Caco-2 (cell line): ENCODE measurements at regions of chr12 and their contacts with region 1.

Region 1: GRCh38 chr12:114684098-114684869 is at the start of gene TBX3:
- DNase-seq: peak; percentile 96 to 99
- H3K4me3 ChIP-seq: peak within 1 kb of the TSS; percentile 65
- H3K4me3 Mint-ChIP-seq: peak within 1 kb of the TSS; percentile 90
- H3K27ac Mint-ChIP-seq: peak within 1 kb of the TSS; percentile 93
- H3K4me1 ChIP-seq: peaks cover 25% of the 10 kb centered on the region
- H3K4me1 Mint-ChIP-seq: peaks cover 29% of the 10 kb centered on the region
- H3K27me3 ChIP-seq: no peaks in the 10 kb centered on the region
- H3K27me3 Mint-ChIP-seq: no peaks in the 10 kb centered on the region
- CTCF ChIP-seq: peak; percentile 58 to 67
- total RNA-seq, gene TBX3: 47.2 and 54.0 TPM in 2 replicates

Region 2: GRCh38 chr12:114704096-114704495 is 19.8 kb after region 1 on chr12:
- CTCF ChIA-PET with region 1: interaction called, 52 read pairs
- POLR2A ChIA-PET with region 1: interaction called, 62 read pairs
- intact Hi-C with region 1: loop called (anchors 1 kb)
- DNase-seq: peak; percentile 60 to 70
- H3K4me3 ChIP-seq: no peak overlapping the region
- H3K4me3 Mint-ChIP-seq: peak overlapping the region; percentile 70
- H3K27ac Mint-ChIP-seq: peak overlapping the region; percentile 95
- H3K4me1 ChIP-seq: peaks cover 38% of the 10 kb centered on the region
- H3K4me1 Mint-ChIP-seq: peaks cover 38% of the 10 kb centered on the region
- H3K27me3 ChIP-seq: no peaks in the 10 kb centered on the region
- H3K27me3 Mint-ChIP-seq: no peaks in the 10 kb centered on the region
- CTCF ChIP-seq: no peak

Region 3: GRCh38 chr12:114799574-114800487 is 115.5 kb after region 1 on chr12:
- CTCF ChIA-PET with region 1: interaction called, 3 read pairs
- POLR2A ChIA-PET with region 1: interaction called, 6 read pairs
- intact Hi-C with region 1: loop called (anchors 1 kb)
- DNase-seq: peak; percentile 92 to 96
- H3K4me3 ChIP-seq: no peak overlapping the region
- H3K4me3 Mint-ChIP-seq: no peak overlapping the region
- H3K27ac Mint-ChIP-seq: peak overlapping the region; percentile 81
- H3K4me1 ChIP-seq: peaks cover 32% of the 10 kb centered on the region
- H3K4me1 Mint-ChIP-seq: peaks cover 17% of the 10 kb centered on the region
- H3K27me3 ChIP-seq: no peaks in the 10 kb centered on the region
- H3K27me3 Mint-ChIP-seq: no peaks in the 10 kb centered on the region
- CTCF ChIP-seq: no peak

Region 4: GRCh38 chr12:114903083-114903691 is 218.9 kb after region 1 on chr12:
- CTCF ChIA-PET with region 1: no interaction called
- POLR2A ChIA-PET with region 1: interaction called, 11 read pairs
- intact Hi-C with region 1: loop called (anchors 5 kb)
- DNase-seq: peak; percentile 40 to 58
- H3K4me3 ChIP-seq: peak overlapping the region; percentile 36
- H3K4me3 Mint-ChIP-seq: no peak overlapping the region
- H3K27ac Mint-ChIP-seq: no peak overlapping the region
- H3K4me1 ChIP-seq: peaks cover 33% of the 10 kb centered on the region
- H3K4me1 Mint-ChIP-seq: no peaks in the 10 kb centered on the region
- H3K27me3 ChIP-seq: no peaks in the 10 kb centered on the region
- H3K27me3 Mint-ChIP-seq: no peaks in the 10 kb centered on the region
- CTCF ChIP-seq: no peak

Region 5: DNA sequence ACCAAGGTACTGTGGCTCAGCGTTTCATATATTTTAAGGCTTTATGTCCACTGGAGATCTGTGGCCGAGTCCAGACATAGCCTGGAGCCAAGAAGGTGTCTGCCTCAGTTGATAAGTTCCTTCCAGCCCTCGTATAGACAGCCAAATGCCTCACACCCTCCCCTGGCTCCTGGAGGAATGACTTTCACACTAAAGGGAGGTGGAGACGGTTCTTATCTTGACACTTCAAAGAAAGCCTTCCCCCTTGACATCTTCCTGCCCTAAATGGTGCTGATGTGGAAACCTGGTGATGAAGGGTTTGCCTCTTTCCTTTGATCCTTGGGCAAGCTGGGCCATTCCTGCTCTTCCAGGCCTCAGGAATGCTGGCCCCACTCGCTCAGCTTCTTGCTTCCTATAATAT is 474.5 kb after region 1 on chr12:
- CTCF ChIA-PET with region 1: interaction called, 7 read pairs
- POLR2A ChIA-PET with region 1: no interaction called
- intact Hi-C with region 1: loop called (anchors 1 kb)
- DNase-seq: peak; percentile 69 to 79
- H3K4me3 ChIP-seq: no peak overlapping the region
- H3K4me3 Mint-ChIP-seq: no peak overlapping the region
- H3K27ac Mint-ChIP-seq: no peak overlapping the region
- H3K4me1 ChIP-seq: peaks cover 40% of the 10 kb centered on the region
- H3K4me1 Mint-ChIP-seq: peaks cover 40% of the 10 kb centered on the region
- H3K27me3 ChIP-seq: no peaks in the 10 kb centered on the region
- H3K27me3 Mint-ChIP-seq: no peaks in the 10 kb centered on the region
- CTCF ChIP-seq: no peak